A549 (cell line): ENCODE measurements at regions of chr10 and their contacts with region 1.

Region 1: GRCh38 chr10:18594574-18595156 is 56.7 kb downstream of the NSUN6 start:
- DNase-seq: peak in 1 of 2 experiments; percentile 52
- ATAC-seq: peak; percentile 90 to 94
- H3K4me3 ChIP-seq: no peak overlapping the region
- H3K27ac ChIP-seq: no peak overlapping the region
- H3K4me1 ChIP-seq: no peaks in the 10 kb centered on the region
- CTCF ChIP-seq: peak; percentile 51
- EP300 ChIP-seq: no peak
- POLR2A ChIP-seq: no peak
- RAD21 ChIP-seq: peak; percentile 30; a peak in 3 of 5 replicates

Region 2: GRCh38 chr10:18583575-18584270 is 10.9 kb before region 1 on chr10:
- CTCF ChIA-PET with region 1: interaction called, 10 read pairs
- POLR2A ChIA-PET with region 1: no interaction called
- DNase-seq: no peak
- ATAC-seq: peak in 1 of 2 experiments; percentile 38; a peak in 1 of 6 replicates
- H3K4me3 ChIP-seq: no peak overlapping the region
- H3K27ac ChIP-seq: no peak overlapping the region
- H3K4me1 ChIP-seq: no peaks in the 10 kb centered on the region
- CTCF ChIP-seq: 0 out of 3 replicates have a peak, but pooled peaks have one; percentile 27
- EP300 ChIP-seq: no peak
- POLR2A ChIP-seq: no peak
- RAD21 ChIP-seq: peak; percentile 9 to 28; a peak in 1 of 5 replicates

Region 3: GRCh38 chr10:18607503-18608378 is 13.1 kb after region 1 on chr10:
- CTCF ChIA-PET with region 1: no interaction called
- POLR2A ChIA-PET with region 1: interaction called, 12 read pairs
- DNase-seq: peak; percentile 72 to 82
- ATAC-seq: peak; percentile 56 to 57
- H3K4me3 ChIP-seq: no peak overlapping the region
- H3K27ac ChIP-seq: peak overlapping the region; percentile 72 to 81
- H3K4me1 ChIP-seq: peaks cover 70% of the 10 kb centered on the region
- CTCF ChIP-seq: no peak
- EP300 ChIP-seq: no peak
- POLR2A ChIP-seq: no peak
- RAD21 ChIP-seq: no peak

Region 4: GRCh38 chr10:18635995-18636394 is 41.3 kb after region 1 on chr10:
- CTCF ChIA-PET with region 1: no interaction called
- POLR2A ChIA-PET with region 1: no interaction called
- DNase-seq: no peak
- ATAC-seq: no peak
- H3K4me3 ChIP-seq: no peak overlapping the region
- H3K27ac ChIP-seq: no peak overlapping the region
- H3K4me1 ChIP-seq: peaks cover 11% of the 10 kb centered on the region; the same call in 1 of the 3 replicates
- CTCF ChIP-seq: no peak
- EP300 ChIP-seq: no peak
- POLR2A ChIP-seq: no peak
- RAD21 ChIP-seq: no peak